ENCODE measurements at regions of chr4 and their contacts with region 1.

Region 1: GRCh38 chr4:39044364-39044955 is 12.3 kb upstream of the TMEM156 start:
- DNase-seq: peak; percentile 93
- ATAC-seq: peak; percentile 82
- H3K4me3 ChIP-seq: peak overlapping the region; percentile 72 to 94 (median 79)
- H3K27ac ChIP-seq: peak overlapping the region; percentile 82
- H3K4me1 ChIP-seq: peaks cover 63% of the 10 kb centered on the region
- H3K27me3 ChIP-seq: no peaks in the 10 kb centered on the region; a peak in 1 of 5 replicates
- CTCF ChIP-seq: peak; percentile 38
- EP300 ChIP-seq: no peak; a peak in 1 of 4 replicates
- POLR2A ChIP-seq: peak; percentile 57 to 91; a peak in 3 of 4 replicates
- RAD21 ChIP-seq: no peak

Region 2: GRCh38 chr4:38620790-38621684 is 423.4 kb before region 1 on chr4:
- CTCF ChIA-PET with region 1: no interaction called
- POLR2A ChIA-PET with region 1: no interaction called
- in situ Hi-C with region 1: no loop called
- intact Hi-C with region 1: no loop called
- DNase-seq: peak; percentile 44
- ATAC-seq: peak; percentile 64
- H3K4me3 ChIP-seq: peak overlapping the region in 2 of 3 experiments; percentile 11 to 29; a peak in 2 of 6 replicates
- H3K27ac ChIP-seq: no peak overlapping the region
- H3K4me1 ChIP-seq: peaks cover 49% of the 10 kb centered on the region
- H3K27me3 ChIP-seq: no peaks in the 10 kb centered on the region
- CTCF ChIP-seq: no peak
- EP300 ChIP-seq: peak in 1 of 2 experiments; percentile 70; a peak in 2 of 4 replicates
- POLR2A ChIP-seq: no peak
- RAD21 ChIP-seq: no peak

Region 3: DNA sequence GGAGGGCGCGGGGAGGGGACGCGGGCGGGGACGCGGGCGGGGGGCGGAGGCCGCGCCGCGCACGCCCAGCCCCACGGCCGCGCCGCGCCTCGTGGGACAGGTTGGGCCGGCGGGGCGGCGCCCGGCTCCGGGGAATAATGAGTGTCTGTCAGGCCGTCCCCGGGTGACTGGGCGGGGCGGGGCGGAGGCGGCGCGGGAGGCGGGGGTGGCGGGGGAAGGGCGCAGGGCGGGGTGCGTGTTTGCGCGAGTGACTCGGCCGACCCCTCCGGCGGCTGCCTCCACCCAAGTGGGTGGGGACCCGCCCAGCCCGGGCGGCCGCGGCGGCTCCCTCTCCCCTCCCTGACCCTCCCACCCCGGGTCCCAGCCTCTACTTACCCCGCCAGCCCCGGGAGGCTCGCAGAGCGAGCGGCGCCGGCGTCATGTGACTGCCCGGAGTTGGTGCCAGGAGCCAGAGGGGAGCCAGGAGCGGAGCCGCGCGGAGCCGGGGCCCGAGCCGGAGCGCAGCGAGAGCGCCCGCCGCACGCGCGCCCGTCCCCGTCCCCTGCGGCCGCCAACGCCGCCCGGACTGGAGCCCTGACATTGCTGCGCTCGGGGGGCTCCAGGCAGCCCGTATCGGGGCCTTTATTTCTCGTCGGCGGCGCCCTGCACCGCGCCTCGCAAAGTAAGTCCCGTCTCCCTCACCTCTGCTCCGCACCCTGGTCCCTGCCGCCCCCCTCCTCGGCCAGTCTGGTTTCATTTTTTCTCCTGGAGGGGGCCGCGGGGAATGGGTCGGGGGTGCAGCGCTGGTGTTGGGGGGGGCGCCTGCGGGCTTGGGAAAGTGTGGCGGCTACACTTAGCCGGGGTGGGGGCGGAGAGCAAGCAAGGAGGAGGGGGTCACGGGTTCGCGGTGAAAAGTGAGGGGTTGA is 380.4 kb before region 1 on chr4 and contains the start of gene KLF3:
- CTCF ChIA-PET with region 1: no interaction called
- POLR2A ChIA-PET with region 1: no interaction called
- in situ Hi-C with region 1: no loop called
- intact Hi-C with region 1: loop called (anchors 10 kb)
- DNase-seq: peak; percentile 73
- ATAC-seq: peak; percentile 68
- H3K4me3 ChIP-seq: peak within 1 kb of the TSS; percentile 77 to 99 (median 90)
- H3K27ac ChIP-seq: peak within 1 kb of the TSS; percentile 96
- H3K4me1 ChIP-seq: peaks cover 22% of the 10 kb centered on the region
- H3K27me3 ChIP-seq: no peaks in the 10 kb centered on the region; a peak in 1 of 5 replicates
- CTCF ChIP-seq: no peak
- EP300 ChIP-seq: 0 out of 4 replicates have a peak, but pooled peaks of 1 of the 2 experiments have one; percentile 10
- POLR2A ChIP-seq: peak; percentile 44 to 71; a peak in 3 of 4 replicates
- RAD21 ChIP-seq: peak; percentile 58
- total RNA-seq, gene KLF3: 29.1 and 45.2 TPM in 2 replicates

Region 4: DNA sequence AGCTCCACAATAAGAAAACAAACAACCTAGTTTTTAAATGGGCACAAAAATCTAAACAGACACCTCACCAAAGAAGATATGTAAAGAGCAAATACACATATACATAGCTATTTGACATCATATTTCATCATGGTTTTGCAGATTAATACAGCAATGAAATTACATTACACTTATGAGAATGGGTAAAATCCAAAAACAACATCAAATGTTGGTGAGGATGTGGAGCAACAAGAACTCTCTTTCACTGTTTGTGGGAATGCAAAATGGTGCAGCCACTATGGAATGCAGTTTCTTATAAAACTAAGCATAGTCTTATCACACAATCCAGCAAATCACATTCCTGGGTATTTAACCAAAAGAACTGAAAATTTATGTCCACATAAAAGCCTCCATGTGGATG is 212.8 kb before region 1 on chr4:
- CTCF ChIA-PET with region 1: no interaction called
- POLR2A ChIA-PET with region 1: no interaction called
- in situ Hi-C with region 1: no loop called
- intact Hi-C with region 1: no loop called
- DNase-seq: no peak
- ATAC-seq: no peak
- H3K4me3 ChIP-seq: no peak overlapping the region
- H3K27ac ChIP-seq: no peak overlapping the region
- H3K4me1 ChIP-seq: peaks cover 4% of the 10 kb centered on the region; the same call in 1 of the 2 replicates
- H3K27me3 ChIP-seq: no peaks in the 10 kb centered on the region; a peak in 1 of 5 replicates
- CTCF ChIP-seq: no peak
- EP300 ChIP-seq: no peak
- POLR2A ChIP-seq: no peak
- RAD21 ChIP-seq: no peak

Region 5: GRCh38 chr4:38902695-38903094 is 141.8 kb before region 1 on chr4:
- CTCF ChIA-PET with region 1: no interaction called
- POLR2A ChIA-PET with region 1: interaction called, 27 read pairs
- in situ Hi-C with region 1: no loop called
- intact Hi-C with region 1: loop called (anchors 10 kb)
- DNase-seq: peak; percentile 27
- ATAC-seq: no peak
- H3K4me3 ChIP-seq: no peak overlapping the region
- H3K27ac ChIP-seq: no peak overlapping the region
- H3K4me1 ChIP-seq: peaks cover 43% of the 10 kb centered on the region
- H3K27me3 ChIP-seq: no peaks in the 10 kb centered on the region
- CTCF ChIP-seq: peak; percentile 49
- EP300 ChIP-seq: no peak
- POLR2A ChIP-seq: no peak
- RAD21 ChIP-seq: no peak

Region 6: GRCh38 chr4:38967260-38968095 is 77.0 kb before region 1 on chr4:
- CTCF ChIA-PET with region 1: no interaction called
- POLR2A ChIA-PET with region 1: interaction called, 11 read pairs
- in situ Hi-C with region 1: no loop called
- intact Hi-C with region 1: no loop called
- DNase-seq: peak; percentile 77
- ATAC-seq: peak; percentile 46; the same call in 2 of the 3 replicates
- H3K4me3 ChIP-seq: no peak overlapping the region
- H3K27ac ChIP-seq: no peak overlapping the region
- H3K4me1 ChIP-seq: peaks cover 27% of the 10 kb centered on the region
- H3K27me3 ChIP-seq: no peaks in the 10 kb centered on the region
- CTCF ChIP-seq: no peak
- EP300 ChIP-seq: peak; percentile 47 to 74; a peak in 2 of 4 replicates
- POLR2A ChIP-seq: no peak
- RAD21 ChIP-seq: no peak

Region 7: DNA sequence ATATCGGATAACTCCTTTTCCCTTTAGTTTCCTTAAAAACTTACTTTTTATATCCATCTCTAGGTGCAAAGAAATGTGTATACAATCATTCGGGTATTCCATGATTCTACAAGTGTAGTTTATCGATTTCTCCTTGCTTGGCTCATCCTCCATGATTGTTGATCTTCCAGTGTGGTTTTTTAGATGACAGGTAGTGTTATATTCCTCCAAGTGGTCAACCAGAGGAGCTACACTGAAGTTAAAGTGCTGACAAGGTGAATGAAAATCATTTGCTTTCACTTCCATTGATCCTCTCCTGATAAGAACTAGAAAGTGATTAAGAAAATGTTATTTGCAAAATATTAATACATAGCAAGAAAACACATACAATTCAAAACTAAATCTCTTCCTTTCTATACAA is 50.8 kb before region 1 on chr4:
- CTCF ChIA-PET with region 1: no interaction called
- POLR2A ChIA-PET with region 1: interaction called, 13 read pairs
- in situ Hi-C with region 1: no loop called
- intact Hi-C with region 1: no loop called
- DNase-seq: peak; percentile 45
- ATAC-seq: peak; percentile 91
- H3K4me3 ChIP-seq: no peak overlapping the region
- H3K27ac ChIP-seq: no peak overlapping the region
- H3K4me1 ChIP-seq: no peaks in the 10 kb centered on the region
- H3K27me3 ChIP-seq: no peaks in the 10 kb centered on the region
- CTCF ChIP-seq: peak; percentile 35
- EP300 ChIP-seq: no peak
- POLR2A ChIP-seq: no peak
- RAD21 ChIP-seq: no peak

Region 8: DNA sequence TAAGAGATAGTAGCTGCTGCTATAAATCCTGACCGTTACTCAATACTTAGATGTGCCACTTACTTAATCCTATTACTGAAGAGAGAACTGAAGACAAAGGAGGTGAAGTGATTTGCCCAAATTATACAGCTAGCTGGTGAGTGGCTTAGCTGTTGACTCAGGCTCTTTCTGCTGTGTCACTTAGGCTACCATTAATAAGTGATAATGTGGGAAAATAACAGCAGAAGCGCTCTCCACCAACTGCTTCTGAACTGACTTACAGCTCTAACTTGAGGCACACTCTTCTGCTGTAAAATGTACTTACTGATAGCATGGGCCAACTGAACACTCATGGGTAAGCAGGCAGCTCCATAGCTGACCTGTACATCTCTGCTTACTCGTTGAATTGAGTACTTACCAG is 10.0 kb after region 1 on chr4:
- CTCF ChIA-PET with region 1: no interaction called
- POLR2A ChIA-PET with region 1: interaction called, 12 read pairs
- in situ Hi-C with region 1: no loop called
- intact Hi-C with region 1: no loop called
- DNase-seq: no peak
- ATAC-seq: no peak
- H3K4me3 ChIP-seq: no peak overlapping the region
- H3K27ac ChIP-seq: no peak overlapping the region
- H3K4me1 ChIP-seq: peaks cover 6% of the 10 kb centered on the region; the same call in 1 of the 2 replicates
- H3K27me3 ChIP-seq: no peaks in the 10 kb centered on the region
- CTCF ChIP-seq: no peak
- EP300 ChIP-seq: no peak
- POLR2A ChIP-seq: no peak
- RAD21 ChIP-seq: no peak

Region 9: DNA sequence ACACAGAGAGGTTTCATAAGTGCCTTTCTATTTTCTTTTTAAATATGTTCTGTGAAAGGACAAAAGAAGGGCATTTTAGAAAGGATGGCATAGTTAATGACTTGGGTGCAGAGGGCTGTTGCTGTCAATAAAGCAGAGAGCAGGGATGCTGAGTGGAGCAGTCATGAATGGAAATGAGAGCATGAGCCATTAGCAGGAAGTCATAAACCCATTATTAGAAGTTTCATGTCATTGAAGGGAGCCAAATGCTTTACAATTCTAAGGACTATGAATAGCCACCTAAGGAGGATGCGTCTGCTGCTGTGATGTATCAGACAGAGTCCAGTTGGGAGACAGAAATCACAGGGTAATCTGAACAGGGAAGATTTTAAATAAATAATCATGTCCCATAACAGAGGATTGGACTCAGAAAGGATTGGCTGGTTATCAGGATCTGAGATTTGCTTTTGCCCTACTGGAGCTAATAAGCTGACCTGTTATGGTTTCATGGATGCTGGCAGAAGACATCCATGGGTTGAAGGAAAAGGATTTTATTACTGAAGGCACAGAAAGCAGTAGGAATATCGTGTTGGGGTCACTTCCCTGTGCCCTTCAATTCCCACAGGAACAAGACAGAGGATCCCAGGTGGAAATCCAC is 90.3 kb after region 1 on chr4:
- CTCF ChIA-PET with region 1: no interaction called
- POLR2A ChIA-PET with region 1: no interaction called
- in situ Hi-C with region 1: no loop called
- intact Hi-C with region 1: loop called (anchors 1 kb)
- DNase-seq: no peak
- ATAC-seq: peak; percentile 20
- H3K4me3 ChIP-seq: peak overlapping the region in 2 of 3 experiments; percentile 1 to 20; a peak in 2 of 6 replicates
- H3K27ac ChIP-seq: no peak overlapping the region
- H3K4me1 ChIP-seq: peaks cover 11% of the 10 kb centered on the region
- H3K27me3 ChIP-seq: no peaks in the 10 kb centered on the region
- CTCF ChIP-seq: no peak
- EP300 ChIP-seq: no peak
- POLR2A ChIP-seq: no peak
- RAD21 ChIP-seq: no peak

Measured in HepG2 (cell line).